HEK293 (cell line): ENCODE measurements at regions of chrX and their contacts with region 1.

Region 1: DNA sequence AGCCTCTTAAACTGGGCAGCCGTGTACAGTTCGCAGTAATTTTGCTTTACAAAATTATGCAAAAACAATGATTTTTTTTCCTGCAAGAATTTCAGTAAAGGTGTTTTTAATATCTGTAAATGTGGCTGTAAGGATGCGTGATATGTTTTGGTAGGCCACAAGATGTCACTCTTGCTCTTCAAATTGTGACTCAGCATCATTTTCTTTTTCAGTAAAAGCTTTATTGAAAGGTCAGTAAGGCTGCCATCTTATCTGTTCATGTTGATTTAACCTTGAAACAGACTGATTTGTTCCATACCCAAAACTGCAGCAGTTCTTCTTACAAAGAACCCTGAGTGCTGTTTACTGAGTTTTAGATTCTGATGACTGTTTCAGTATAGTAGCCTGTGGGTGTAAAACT is 39.9 kb downstream of the TXLNG start:
- H3K4me3 ChIP-seq: no peak overlapping the region
- H3K27ac ChIP-seq: no peak overlapping the region
- H3K4me1 ChIP-seq: peaks cover 13% of the 10 kb centered on the region
- CTCF ChIP-seq: no peak; the same call in 1 of the 2 replicates

Region 2: DNA sequence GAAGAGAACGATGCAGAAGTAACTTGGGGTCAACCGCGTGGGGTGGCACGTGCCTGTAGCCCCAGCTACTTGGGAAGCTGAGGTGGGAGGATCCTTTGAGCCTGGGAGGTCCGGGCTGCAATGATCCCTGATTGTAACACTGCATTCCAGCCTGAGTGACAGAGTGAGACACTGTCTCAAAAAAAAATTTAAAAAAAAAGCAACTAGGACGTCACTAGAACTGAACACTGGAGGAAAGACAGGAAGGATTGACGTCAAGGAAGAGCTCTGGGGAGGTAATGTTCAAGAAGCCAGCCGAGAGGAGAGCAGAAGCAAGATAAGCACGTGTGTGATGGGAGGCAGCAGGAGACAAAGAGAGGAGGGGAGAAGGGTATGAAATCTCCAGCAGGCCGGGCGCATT is 147.5 kb before region 1 on chrX:
- CTCF ChIA-PET with region 1: no interaction called
- POLR2A ChIA-PET with region 1: no interaction called
- H3K4me3 ChIP-seq: no peak overlapping the region
- H3K27ac ChIP-seq: no peak overlapping the region
- H3K4me1 ChIP-seq: no peaks in the 10 kb centered on the region
- CTCF ChIP-seq: no peak

Region 3: GRCh38 chrX:16807548-16807947 is 18.7 kb before region 1 on chrX:
- CTCF ChIA-PET with region 1: interaction called, 15 read pairs
- POLR2A ChIA-PET with region 1: no interaction called
- H3K4me3 ChIP-seq: no peak overlapping the region
- H3K27ac ChIP-seq: no peak overlapping the region
- H3K4me1 ChIP-seq: peaks cover 9% of the 10 kb centered on the region
- CTCF ChIP-seq: no peak

Region 4: DNA sequence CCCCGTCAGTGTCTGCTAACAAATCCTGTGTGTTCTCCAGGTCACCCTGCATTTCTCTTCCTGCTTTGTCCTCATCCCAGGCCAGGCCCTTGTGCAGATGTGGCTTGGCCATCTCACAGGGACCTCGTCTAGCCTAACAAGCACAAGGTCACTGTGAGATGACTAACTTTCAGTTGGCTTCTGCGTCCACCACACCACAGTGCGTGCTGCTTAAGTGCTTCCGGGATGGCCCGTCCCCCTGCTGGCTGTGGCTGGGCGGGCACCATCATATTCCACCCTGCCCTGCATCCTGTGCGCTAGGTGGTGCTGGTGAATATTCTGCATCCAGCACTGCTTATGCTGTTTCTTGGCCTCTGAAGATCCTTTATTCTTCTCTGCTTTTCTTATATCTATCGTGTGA is 10.2 kb after region 1 on chrX:
- CTCF ChIA-PET with region 1: interaction called, 15 read pairs
- POLR2A ChIA-PET with region 1: interaction called, 3 read pairs
- H3K4me3 ChIP-seq: no peak overlapping the region
- H3K27ac ChIP-seq: no peak overlapping the region
- H3K4me1 ChIP-seq: peaks cover 6% of the 10 kb centered on the region; the same call in 1 of the 2 replicates
- CTCF ChIP-seq: peak; percentile 92

Region 5: GRCh38 chrX:16842684-16843083 is 16.5 kb after region 1 on chrX:
- CTCF ChIA-PET with region 1: interaction called, 15 read pairs
- POLR2A ChIA-PET with region 1: interaction called, 3 read pairs
- H3K4me3 ChIP-seq: no peak overlapping the region
- H3K27ac ChIP-seq: no peak overlapping the region
- H3K4me1 ChIP-seq: peaks cover 6% of the 10 kb centered on the region; the same call in 1 of the 2 replicates
- CTCF ChIP-seq: no peak

Region 6: DNA sequence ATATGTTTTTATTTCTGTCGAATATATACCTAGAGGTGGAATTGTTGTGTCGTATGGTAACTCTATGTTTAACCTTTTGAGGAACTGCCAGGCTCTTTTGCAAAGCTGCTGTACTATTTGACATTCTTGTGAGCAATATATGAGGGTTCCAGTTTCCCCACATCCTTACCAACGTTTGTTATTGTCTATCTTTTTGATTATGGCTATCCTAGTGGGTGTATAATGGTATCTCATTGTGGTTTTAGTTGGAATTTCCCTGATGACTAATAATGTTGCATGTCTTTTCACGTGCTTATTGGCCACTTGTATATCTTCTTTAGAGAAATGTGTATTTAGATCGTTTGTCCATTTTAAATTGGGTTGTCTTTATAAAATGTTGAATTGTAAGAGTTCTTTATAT is 144.8 kb after region 1 on chrX:
- CTCF ChIA-PET with region 1: no interaction called
- POLR2A ChIA-PET with region 1: no interaction called
- H3K4me3 ChIP-seq: no peak overlapping the region
- H3K27ac ChIP-seq: no peak overlapping the region
- H3K4me1 ChIP-seq: no peaks in the 10 kb centered on the region
- CTCF ChIP-seq: no peak

Region 7: DNA sequence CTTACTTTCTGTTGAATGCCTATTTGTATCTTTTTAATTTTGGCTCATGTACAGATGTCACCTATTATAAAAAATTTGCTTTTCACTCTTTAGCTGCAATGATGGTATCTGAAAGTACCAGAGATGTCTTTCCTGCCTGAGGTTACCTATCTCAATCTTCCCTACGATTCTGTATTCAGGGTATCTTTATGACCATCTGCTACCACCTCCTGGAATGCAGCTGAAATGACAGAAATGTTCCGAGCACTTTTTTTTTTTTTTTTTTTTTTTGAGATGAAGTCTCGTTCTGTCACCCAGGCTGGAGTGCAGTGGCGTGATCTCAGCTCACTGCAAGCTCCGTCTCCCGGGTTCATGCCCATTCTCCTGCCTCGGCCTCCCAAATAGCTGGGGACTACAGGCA is 256.6 kb after region 1 on chrX:
- CTCF ChIA-PET with region 1: interaction called, 15 read pairs
- POLR2A ChIA-PET with region 1: interaction called, 3 read pairs
- H3K4me3 ChIP-seq: no peak overlapping the region
- H3K27ac ChIP-seq: no peak overlapping the region
- H3K4me1 ChIP-seq: no peaks in the 10 kb centered on the region
- CTCF ChIP-seq: peak; percentile 43; the same call in 1 of the 2 replicates